CD4-positive, alpha-beta T cell (primary cell): ENCODE measurements at regions of chr11 and their contacts with region 1.

Region 1: DNA sequence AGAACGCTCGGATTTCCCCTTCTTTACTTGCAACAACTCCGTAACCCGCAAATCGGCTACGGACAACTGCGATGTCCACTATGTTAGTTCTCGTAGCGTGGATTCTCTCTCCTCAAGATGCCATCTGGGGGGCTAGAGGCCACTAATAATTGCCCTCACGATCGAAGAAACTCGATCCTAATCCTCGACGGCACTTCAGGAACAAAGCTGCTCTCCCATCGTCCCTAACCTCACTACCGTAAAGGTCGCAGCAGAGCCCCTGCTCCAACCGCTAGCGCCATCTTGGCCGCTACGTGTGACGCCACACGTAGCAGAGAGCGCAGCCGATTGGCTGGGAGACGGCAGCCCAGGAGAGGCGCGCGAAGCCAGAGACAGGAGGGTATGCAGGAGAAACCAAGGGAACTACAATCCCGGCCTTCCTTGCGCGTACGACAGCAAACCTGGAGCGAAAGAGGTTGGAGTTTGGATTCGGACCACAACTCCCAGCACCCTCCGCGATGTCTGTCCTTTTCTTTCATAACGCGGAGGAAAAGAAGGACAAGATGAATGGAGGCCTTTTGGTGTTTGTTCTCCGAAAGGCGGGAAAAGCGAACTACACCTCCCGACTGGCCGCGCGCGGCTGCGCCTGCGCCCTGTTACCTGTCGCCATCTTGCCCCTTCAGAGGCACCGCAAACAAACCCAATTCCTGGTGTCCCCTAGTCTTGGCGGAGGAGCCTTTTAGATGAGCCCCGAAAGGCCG is at the start of gene EMSY:
- DNase-seq: peak; percentile 82 to 98 (median 88)
- ATAC-seq: peak; percentile 91
- H3K4me3 ChIP-seq: peak within 1 kb of the TSS; percentile 78
- H3K4me3 Mint-ChIP-seq: peak within 1 kb of the TSS; percentile 94
- H3K27ac ChIP-seq: peak within 1 kb of the TSS; percentile 76 to 91
- H3K27ac Mint-ChIP-seq: peak within 1 kb of the TSS; percentile 95
- H3K4me1 ChIP-seq: peaks cover 22% of the 10 kb centered on the region
- H3K4me1 Mint-ChIP-seq: peaks cover 53% of the 10 kb centered on the region
- H3K27me3 ChIP-seq: no peaks in the 10 kb centered on the region
- H3K27me3 Mint-ChIP-seq: no peaks in the 10 kb centered on the region
- CTCF ChIP-seq: no peak
- total RNA-seq, gene EMSY: 20.9 to 21.8 TPM

Region 2: DNA sequence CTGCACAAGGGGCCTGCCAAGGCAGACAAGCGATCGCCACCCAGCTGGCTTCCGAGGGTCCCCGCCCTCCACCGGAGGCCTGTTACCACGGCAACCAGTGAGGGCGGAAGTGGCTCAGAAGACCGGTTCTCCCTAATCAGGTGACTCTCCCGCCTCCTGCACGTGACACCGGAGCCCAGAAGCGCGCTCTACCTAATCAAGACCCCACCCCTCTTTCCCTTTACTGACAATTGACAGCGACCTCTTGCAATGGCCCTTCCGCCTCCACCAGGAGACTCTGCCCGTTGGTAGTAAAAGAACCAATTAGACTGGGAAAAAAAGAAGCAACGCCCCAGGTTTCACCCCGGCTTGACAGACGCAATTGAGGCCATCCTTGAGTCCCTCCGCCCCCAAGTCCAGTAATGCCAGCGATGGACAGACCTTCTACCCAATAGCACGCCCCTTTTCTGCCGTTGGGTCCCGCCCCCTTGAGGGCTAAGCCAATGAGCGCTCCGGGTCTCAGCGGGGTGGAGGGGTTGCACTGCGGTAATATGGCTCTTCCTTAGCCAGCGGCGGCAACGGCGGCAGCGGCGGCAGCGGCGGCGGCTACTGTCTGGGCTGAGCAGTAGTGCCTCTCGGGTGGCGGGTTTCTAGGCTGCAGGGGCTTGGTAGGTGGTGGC is 629.7 kb before region 1 on chr11 and contains the start of gene UVRAG:
- CTCF ChIA-PET with region 1: interaction called, 3 read pairs
- POLR2A ChIA-PET with region 1: no interaction called
- intact Hi-C with region 1: loop called in 1 of 2 experiments (anchors 5 kb)
- DNase-seq: peak; percentile 96 to 99 (median 97)
- ATAC-seq: peak; percentile 86
- H3K4me3 ChIP-seq: peak within 1 kb of the TSS; percentile 88
- H3K4me3 Mint-ChIP-seq: peak within 1 kb of the TSS; percentile 95
- H3K27ac ChIP-seq: peak within 1 kb of the TSS; percentile 78 to 83
- H3K27ac Mint-ChIP-seq: peak within 1 kb of the TSS; percentile 92
- H3K4me1 ChIP-seq: peaks cover 30% of the 10 kb centered on the region
- H3K4me1 Mint-ChIP-seq: peaks cover 29% of the 10 kb centered on the region
- H3K27me3 ChIP-seq: no peaks in the 10 kb centered on the region
- H3K27me3 Mint-ChIP-seq: no peaks in the 10 kb centered on the region
- CTCF ChIP-seq: no peak
- total RNA-seq, gene UVRAG: 16.5 to 19.5 TPM

Region 3: GRCh38 chr11:76235233-76236091 is 209.1 kb before region 1 on chr11:
- CTCF ChIA-PET with region 1: no interaction called
- POLR2A ChIA-PET with region 1: no interaction called
- intact Hi-C with region 1: loop called in 1 of 2 experiments (anchors 5 kb)
- DNase-seq: peak; percentile 82 to 96 (median 90)
- ATAC-seq: peak; percentile 77
- H3K4me3 ChIP-seq: peak overlapping the region; percentile 84
- H3K4me3 Mint-ChIP-seq: peak overlapping the region; percentile 100
- H3K27ac ChIP-seq: peak overlapping the region; percentile 10 to 37
- H3K27ac Mint-ChIP-seq: peak overlapping the region; percentile 99
- H3K4me1 ChIP-seq: peaks cover 58% of the 10 kb centered on the region
- H3K4me1 Mint-ChIP-seq: peaks cover 54% of the 10 kb centered on the region
- H3K27me3 ChIP-seq: no peaks in the 10 kb centered on the region
- H3K27me3 Mint-ChIP-seq: peaks cover 18% of the 10 kb centered on the region
- CTCF ChIP-seq: no peak

Region 4: GRCh38 chr11:76380967-76381719 is 63.4 kb before region 1 on chr11 and contains the starts of genes GVQW3 and THAP12:
- CTCF ChIA-PET with region 1: interaction called, 3 read pairs
- POLR2A ChIA-PET with region 1: interaction called, 7 read pairs
- intact Hi-C with region 1: loop called (anchors 1 kb)
- DNase-seq: peak; percentile 93 to 99 (median 97)
- ATAC-seq: peak; percentile 89
- H3K4me3 ChIP-seq: peak within 1 kb of the TSS; percentile 78
- H3K4me3 Mint-ChIP-seq: peak within 1 kb of the TSS; percentile 97
- H3K27ac ChIP-seq: peak within 1 kb of the TSS; percentile 11 to 24
- H3K27ac Mint-ChIP-seq: peak within 1 kb of the TSS; percentile 87
- H3K4me1 ChIP-seq: peaks cover 45% of the 10 kb centered on the region
- H3K4me1 Mint-ChIP-seq: peaks cover 76% of the 10 kb centered on the region
- H3K27me3 ChIP-seq: no peaks in the 10 kb centered on the region
- H3K27me3 Mint-ChIP-seq: no peaks in the 10 kb centered on the region
- CTCF ChIP-seq: no peak
- total RNA-seq, gene GVQW3: 1.8 TPM
- total RNA-seq, gene THAP12: 34.8 to 36.3 TPM

Region 5: GRCh38 chr11:76510060-76511047 is 65.8 kb after region 1 on chr11:
- CTCF ChIA-PET with region 1: no interaction called
- POLR2A ChIA-PET with region 1: no interaction called
- intact Hi-C with region 1: no loop called
- DNase-seq: no peak
- ATAC-seq: no peak
- H3K4me3 ChIP-seq: no peak overlapping the region
- H3K4me3 Mint-ChIP-seq: no peak overlapping the region
- H3K27ac ChIP-seq: no peak overlapping the region
- H3K27ac Mint-ChIP-seq: no peak overlapping the region
- H3K4me1 ChIP-seq: no peaks in the 10 kb centered on the region
- H3K4me1 Mint-ChIP-seq: no peaks in the 10 kb centered on the region
- H3K27me3 ChIP-seq: no peaks in the 10 kb centered on the region
- H3K27me3 Mint-ChIP-seq: no peaks in the 10 kb centered on the region
- CTCF ChIP-seq: no peak

Region 6: GRCh38 chr11:76850815-76851214 is 406.3 kb after region 1 on chr11:
- CTCF ChIA-PET with region 1: no interaction called
- POLR2A ChIA-PET with region 1: no interaction called
- intact Hi-C with region 1: loop called in 1 of 2 experiments (anchors 10 kb)
- DNase-seq: no peak
- ATAC-seq: no peak
- H3K4me3 ChIP-seq: no peak overlapping the region
- H3K4me3 Mint-ChIP-seq: no peak overlapping the region
- H3K27ac ChIP-seq: no peak overlapping the region
- H3K27ac Mint-ChIP-seq: no peak overlapping the region
- H3K4me1 ChIP-seq: no peaks in the 10 kb centered on the region
- H3K4me1 Mint-ChIP-seq: no peaks in the 10 kb centered on the region
- H3K27me3 ChIP-seq: peaks cover 0 to 4% of the 10 kb centered on the region in 2 experiments
- H3K27me3 Mint-ChIP-seq: peaks cover 11% of the 10 kb centered on the region
- CTCF ChIP-seq: no peak